ENCODE measurements at regions of chr20 and their contacts with region 1.

Region 1: GRCh38 chr20:5529331-5530148 is 212.8 kb upstream of the PROKR2 start:
- H3K4me3 ChIP-seq: no peak overlapping the region
- H3K27ac ChIP-seq: no peak overlapping the region
- H3K4me1 ChIP-seq: no peaks in the 10 kb centered on the region
- CTCF ChIP-seq: peak; percentile 63; the same call in 1 of the 2 replicates

Region 2: DNA sequence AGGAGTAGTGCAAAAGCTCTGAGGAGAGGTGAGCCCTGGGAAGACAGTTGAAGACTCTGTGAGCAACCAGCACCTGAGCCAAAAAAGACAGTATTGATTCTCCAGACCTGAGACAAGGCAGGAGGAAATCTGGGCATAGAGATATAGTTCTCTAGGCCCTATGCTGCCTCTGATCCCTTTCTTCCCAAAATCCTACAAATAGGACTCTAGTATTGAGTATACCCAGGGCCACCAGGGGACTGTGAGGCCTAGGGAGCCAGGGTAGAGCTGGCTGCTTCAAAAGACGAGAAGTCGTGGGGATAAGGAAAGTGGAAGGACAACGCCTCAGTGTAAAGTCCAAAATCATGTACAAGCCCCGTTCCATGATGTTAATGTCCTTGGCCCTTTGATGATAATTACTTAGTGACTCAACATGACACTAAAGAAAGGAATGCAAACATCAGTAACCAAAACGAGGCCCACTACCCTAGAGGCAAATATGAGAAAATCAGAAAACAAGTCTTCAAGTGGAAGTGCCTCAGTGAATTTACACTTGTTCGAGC is 15.5 kb before region 1 on chr20:
- CTCF ChIA-PET with region 1: interaction called, 12 read pairs
- POLR2A ChIA-PET with region 1: no interaction called
- H3K4me3 ChIP-seq: no peak overlapping the region
- H3K27ac ChIP-seq: no peak overlapping the region
- H3K4me1 ChIP-seq: no peaks in the 10 kb centered on the region
- CTCF ChIP-seq: no peak

Region 3: GRCh38 chr20:5550733-5551529 is 21.4 kb after region 1 on chr20:
- CTCF ChIA-PET with region 1: interaction called, 44 read pairs
- POLR2A ChIA-PET with region 1: no interaction called
- H3K4me3 ChIP-seq: no peak overlapping the region
- H3K27ac ChIP-seq: no peak overlapping the region
- H3K4me1 ChIP-seq: no peaks in the 10 kb centered on the region
- CTCF ChIP-seq: no peak

Region 4: DNA sequence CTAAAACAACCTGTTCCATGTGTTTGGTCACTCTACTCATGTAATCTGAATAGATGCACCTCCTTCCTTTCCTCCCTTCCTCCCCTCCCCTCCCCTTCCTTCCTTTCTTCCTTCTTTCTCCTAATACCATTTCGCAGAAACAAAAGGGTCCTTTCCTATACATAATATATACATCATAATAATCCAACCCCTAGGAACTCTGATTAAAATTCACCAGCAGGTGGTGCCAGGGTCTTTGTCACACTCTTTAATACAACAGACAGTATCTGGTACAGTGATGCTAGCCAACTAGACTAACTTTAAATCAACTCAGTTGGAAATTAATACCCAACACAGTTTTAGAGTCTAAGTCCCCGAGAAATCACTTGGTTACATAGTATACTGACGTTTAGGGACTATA is 39.5 kb after region 1 on chr20:
- CTCF ChIA-PET with region 1: interaction called, 10 read pairs
- POLR2A ChIA-PET with region 1: no interaction called
- H3K4me3 ChIP-seq: no peak overlapping the region
- H3K27ac ChIP-seq: no peak overlapping the region
- H3K4me1 ChIP-seq: no peaks in the 10 kb centered on the region
- CTCF ChIP-seq: peak; percentile 29; the same call in 1 of the 2 replicates

Region 5: DNA sequence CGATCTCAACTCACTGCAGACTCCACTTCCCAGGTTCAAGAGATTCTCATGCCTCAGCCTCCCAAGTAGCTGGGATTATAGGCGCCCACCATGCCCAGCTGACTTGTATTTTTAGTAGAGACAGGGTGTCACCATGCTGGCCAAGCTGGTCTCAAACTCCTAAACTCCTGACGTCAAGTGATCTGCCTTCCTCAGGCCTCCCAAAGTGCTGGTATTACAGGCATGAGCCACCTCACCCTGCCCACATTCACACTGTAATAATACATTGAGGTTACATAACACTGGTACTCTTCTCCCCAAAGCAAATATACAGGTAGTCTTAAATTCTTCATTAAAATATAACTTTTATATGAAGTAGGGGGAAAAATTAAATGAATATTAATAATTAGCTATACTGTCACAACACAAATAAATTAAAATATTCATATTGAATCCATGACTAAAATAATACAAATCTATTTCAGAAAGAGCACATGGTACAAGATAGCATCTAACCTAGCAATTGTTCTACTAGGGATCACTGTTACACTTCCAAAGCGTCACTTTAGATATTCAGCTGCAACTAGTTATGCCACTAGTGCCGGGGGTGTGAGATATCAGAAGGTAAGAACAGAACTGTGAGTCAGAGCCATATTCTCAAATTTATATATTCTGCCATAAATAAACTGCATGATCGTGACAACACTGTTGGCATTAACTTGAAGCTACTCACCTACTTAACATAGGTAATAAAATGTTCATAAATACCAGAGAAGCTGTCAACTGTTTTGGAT is 51.6 kb after region 1 on chr20:
- CTCF ChIA-PET with region 1: no interaction called
- POLR2A ChIA-PET with region 1: no interaction called
- H3K4me3 ChIP-seq: no peak overlapping the region
- H3K27ac ChIP-seq: no peak overlapping the region
- H3K4me1 ChIP-seq: peaks cover 5% of the 10 kb centered on the region; the same call in 1 of the 2 replicates
- CTCF ChIP-seq: no peak

Region 6: GRCh38 chr20:6074145-6074561 is 544.6 kb after region 1 on chr20:
- CTCF ChIA-PET with region 1: interaction called, 18 read pairs
- POLR2A ChIA-PET with region 1: no interaction called
- H3K4me3 ChIP-seq: no peak overlapping the region
- H3K27ac ChIP-seq: no peak overlapping the region
- H3K4me1 ChIP-seq: no peaks in the 10 kb centered on the region
- CTCF ChIP-seq: no peak

Measured in HEK293 (cell line).